Caco-2 (cell line): ENCODE measurements at regions of chr4 and their contacts with region 1.

Region 1: DNA sequence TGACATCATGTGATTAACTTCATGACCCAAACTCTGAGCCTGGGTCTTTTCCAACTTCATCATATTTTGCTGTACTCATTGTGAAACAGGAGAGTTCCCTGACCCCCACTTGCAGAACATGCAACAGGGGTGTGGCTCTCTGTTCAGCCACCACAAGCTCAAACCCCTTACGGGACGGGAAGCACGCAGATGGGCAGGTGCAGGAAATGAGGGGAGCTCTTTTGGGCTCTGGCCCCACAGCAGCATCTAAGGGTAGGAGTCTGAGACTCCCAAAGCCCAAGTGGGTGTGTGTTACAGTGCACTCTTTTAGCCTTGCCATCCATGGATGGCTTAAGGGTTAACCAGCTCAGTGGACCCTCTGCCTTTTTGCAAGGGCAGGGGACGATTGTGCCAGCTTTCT is 599.5 kb upstream of the SMIM31 start:
- DNase-seq: no peak
- H3K4me3 ChIP-seq: no peak overlapping the region
- H3K4me3 Mint-ChIP-seq: no peak overlapping the region
- H3K27ac Mint-ChIP-seq: no peak overlapping the region
- H3K4me1 ChIP-seq: peaks cover 21% of the 10 kb centered on the region
- H3K4me1 Mint-ChIP-seq: peaks cover 20% of the 10 kb centered on the region
- H3K27me3 ChIP-seq: no peaks in the 10 kb centered on the region
- H3K27me3 Mint-ChIP-seq: no peaks in the 10 kb centered on the region
- CTCF ChIP-seq: no peak

Region 2: GRCh38 chr4:164109517-164109916 is 44.9 kb before region 1 on chr4:
- CTCF ChIA-PET with region 1: no interaction called
- POLR2A ChIA-PET with region 1: no interaction called
- intact Hi-C with region 1: loop called (anchors 2 kb)
- DNase-seq: no peak
- H3K4me3 ChIP-seq: no peak overlapping the region
- H3K4me3 Mint-ChIP-seq: peak overlapping the region; percentile 13
- H3K27ac Mint-ChIP-seq: no peak overlapping the region
- H3K4me1 ChIP-seq: no peaks in the 10 kb centered on the region
- H3K4me1 Mint-ChIP-seq: peaks cover 5% of the 10 kb centered on the region
- H3K27me3 ChIP-seq: no peaks in the 10 kb centered on the region
- H3K27me3 Mint-ChIP-seq: no peaks in the 10 kb centered on the region
- CTCF ChIP-seq: no peak

Region 3: GRCh38 chr4:164204434-164204833 is 50.0 kb after region 1 on chr4:
- CTCF ChIA-PET with region 1: no interaction called
- POLR2A ChIA-PET with region 1: no interaction called
- intact Hi-C with region 1: loop called (anchors 2 kb)
- DNase-seq: peak in 1 of 2 experiments; percentile 16
- H3K4me3 ChIP-seq: no peak overlapping the region
- H3K4me3 Mint-ChIP-seq: no peak overlapping the region
- H3K27ac Mint-ChIP-seq: peak overlapping the region; percentile 55
- H3K4me1 ChIP-seq: peaks cover 17% of the 10 kb centered on the region
- H3K4me1 Mint-ChIP-seq: peaks cover 12% of the 10 kb centered on the region
- H3K27me3 ChIP-seq: no peaks in the 10 kb centered on the region
- H3K27me3 Mint-ChIP-seq: no peaks in the 10 kb centered on the region
- CTCF ChIP-seq: no peak